ENCODE measurements at regions of chr1 and their contacts with region 1.

Region 1: DNA sequence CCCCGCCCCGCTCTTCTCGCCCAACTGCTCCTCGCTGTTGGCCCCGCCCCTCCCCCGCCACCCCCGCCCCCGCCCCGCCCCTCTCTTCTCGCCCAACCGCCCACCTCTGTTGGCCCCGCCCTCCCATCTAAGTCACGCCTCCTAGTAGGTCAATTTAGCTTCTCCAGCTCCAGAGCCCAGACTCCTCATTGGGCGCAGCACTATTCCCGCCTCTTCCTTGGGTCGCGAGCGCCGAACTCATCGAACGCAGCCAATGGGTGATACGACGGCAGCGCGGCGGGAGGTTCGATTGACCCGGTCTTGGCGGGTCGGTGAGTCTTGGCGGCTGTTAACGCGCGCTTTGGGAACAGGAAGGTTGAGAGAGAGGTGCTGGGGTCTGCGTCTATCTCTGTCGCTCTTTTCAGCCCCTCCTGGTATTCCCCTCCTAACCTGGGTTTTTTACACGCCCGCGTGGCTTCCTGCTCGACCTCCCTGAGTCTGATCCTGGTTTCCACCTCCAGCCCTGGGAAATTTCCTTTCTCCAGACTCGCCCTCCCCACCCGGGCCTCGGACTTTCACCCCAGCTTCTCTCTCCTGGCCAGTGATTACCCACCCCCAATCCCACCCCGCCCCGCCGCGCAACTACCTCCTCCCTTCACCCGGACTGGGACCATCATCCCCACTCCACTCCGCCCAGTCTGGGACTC is at the start of gene RAD54L:
- DNase-seq: peak; percentile 93 to 99 (median 98)
- ATAC-seq: peak; percentile 93 to 98 (median 96)
- H3K4me3 ChIP-seq: peak within 1 kb of the TSS; percentile 29 to 65 (median 40)
- H3K27ac ChIP-seq: peak within 1 kb of the TSS in 3 of 4 donors; percentile 57 to 84 (median 76)
- H3K4me1 ChIP-seq: no peaks in the 10 kb centered on the region
- H3K27me3 ChIP-seq: no peaks in the 10 kb centered on the region
- CTCF ChIP-seq: no peak
- total RNA-seq, gene RAD54L: 0.39 to 0.66 (median 0.43) TPM in 5 of 6 donors, not detected in the other

Region 2: GRCh38 chr1:46340404-46341221 is 93.0 kb after region 1 on chr1 and contains the start of gene NSUN4:
- intact Hi-C with region 1: loop called in 1 of 3 experiments (anchors 10 kb)
- DNase-seq: peak; percentile 90 to 95 (median 91)
- ATAC-seq: peak; percentile 95 to 98 (median 97)
- H3K4me3 ChIP-seq: peak within 1 kb of the TSS; percentile 42 to 79 (median 60)
- H3K27ac ChIP-seq: peak within 1 kb of the TSS; percentile 82 to 97 (median 89)
- H3K4me1 ChIP-seq: peaks cover 0 to 9% (median 0%) of the 10 kb centered on the region in 3 donors
- H3K27me3 ChIP-seq: no peaks in the 10 kb centered on the region
- CTCF ChIP-seq: peak; percentile 19 to 46 (median 37)
- total RNA-seq, gene NSUN4: 9.0 to 16.4 (median 11.5) TPM

Measured in pancreas (tissue), 10 donors.